Activated CD8-positive, alpha-beta memory T cell treated with anti-CD3 and anti-CD28 coated beads, Interleukin-2, amount 10 ng/mL, durations not matched to agents 7 days and 5 days (primary cell): ENCODE measurements at regions of chr2 and their contacts with region 1.

Region 1: DNA sequence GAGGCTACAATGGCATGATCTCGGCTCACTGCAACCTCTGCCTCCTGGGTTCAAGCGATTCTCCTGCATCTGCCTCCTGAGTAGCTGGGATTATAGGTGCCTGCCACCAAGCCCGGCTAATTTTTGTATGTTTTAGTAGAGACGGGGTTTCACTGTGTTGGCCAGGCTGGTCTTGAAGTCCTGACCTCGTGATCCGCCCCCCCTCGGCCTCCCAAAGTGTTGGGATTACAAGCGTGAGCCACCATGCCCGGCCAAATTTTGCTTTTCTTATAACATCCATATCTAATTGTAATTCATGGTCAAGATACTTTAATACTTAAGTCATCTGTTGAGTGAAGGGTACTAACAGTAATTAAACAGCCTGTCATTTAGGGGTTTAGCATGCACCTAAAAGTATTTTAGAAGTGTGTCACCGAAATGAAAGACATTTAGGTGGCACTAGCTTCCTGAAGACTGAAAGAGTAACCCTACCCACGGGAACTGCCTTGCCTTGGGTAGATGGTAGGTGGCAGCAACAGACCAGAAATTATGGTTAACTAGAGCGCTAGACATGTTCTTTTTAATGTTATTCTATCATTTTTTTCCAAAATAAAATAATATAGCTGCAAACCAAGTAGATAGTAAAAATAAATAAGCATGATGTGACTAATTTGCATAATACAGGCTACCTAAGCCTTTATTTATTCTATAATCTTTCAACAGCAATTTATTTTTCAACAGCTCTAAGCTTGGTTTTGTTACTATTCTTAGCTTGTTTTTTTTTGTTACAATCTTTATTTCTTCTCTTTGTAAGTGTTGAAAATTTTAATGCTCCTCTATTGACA is 8.6 kb upstream of the ACYP2 start:
- DNase-seq: peak; percentile 63
- ATAC-seq: peak; percentile 82
- H3K4me3 Mint-ChIP-seq: no peak overlapping the region
- H3K27ac Mint-ChIP-seq: no peak overlapping the region
- H3K4me1 Mint-ChIP-seq: peaks cover 11% of the 10 kb centered on the region
- H3K27me3 Mint-ChIP-seq: no peaks in the 10 kb centered on the region

Region 2: GRCh38 chr2:54092940-54093339 is 13.9 kb before region 1 on chr2:
- CTCF ChIA-PET with region 1: interaction called, 13 read pairs
- DNase-seq: no peak
- ATAC-seq: peak; percentile 42
- H3K4me3 Mint-ChIP-seq: no peak overlapping the region
- H3K27ac Mint-ChIP-seq: peak overlapping the region; percentile 22
- H3K4me1 Mint-ChIP-seq: peaks cover 13% of the 10 kb centered on the region
- H3K27me3 Mint-ChIP-seq: no peaks in the 10 kb centered on the region

Region 3: DNA sequence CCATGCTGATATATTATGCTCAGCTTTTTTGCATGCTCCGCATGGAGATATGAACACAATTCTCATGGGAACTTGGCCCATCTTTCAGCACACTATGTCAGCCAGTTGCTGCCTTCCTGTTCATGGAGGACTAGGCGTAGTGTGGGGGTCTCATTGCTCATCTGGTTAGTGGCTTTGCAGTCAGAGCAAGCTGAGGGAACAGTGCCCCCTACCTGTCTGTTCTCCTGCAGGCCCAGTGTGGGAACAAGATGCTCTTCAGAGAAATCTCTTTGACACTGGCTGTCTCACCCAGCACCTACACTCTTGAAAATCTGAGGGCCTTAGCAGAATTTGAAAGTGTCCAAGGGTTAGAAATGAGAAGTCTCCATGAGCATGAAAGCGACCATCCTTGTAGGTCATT is 396.3 kb after region 1 on chr2:
- CTCF ChIA-PET with region 1: interaction called, 16 read pairs
- DNase-seq: peak; percentile 56
- ATAC-seq: peak; percentile 39
- H3K4me3 Mint-ChIP-seq: no peak overlapping the region
- H3K27ac Mint-ChIP-seq: no peak overlapping the region
- H3K4me1 Mint-ChIP-seq: no peaks in the 10 kb centered on the region
- H3K27me3 Mint-ChIP-seq: peaks cover 4% of the 10 kb centered on the region

Region 4: DNA sequence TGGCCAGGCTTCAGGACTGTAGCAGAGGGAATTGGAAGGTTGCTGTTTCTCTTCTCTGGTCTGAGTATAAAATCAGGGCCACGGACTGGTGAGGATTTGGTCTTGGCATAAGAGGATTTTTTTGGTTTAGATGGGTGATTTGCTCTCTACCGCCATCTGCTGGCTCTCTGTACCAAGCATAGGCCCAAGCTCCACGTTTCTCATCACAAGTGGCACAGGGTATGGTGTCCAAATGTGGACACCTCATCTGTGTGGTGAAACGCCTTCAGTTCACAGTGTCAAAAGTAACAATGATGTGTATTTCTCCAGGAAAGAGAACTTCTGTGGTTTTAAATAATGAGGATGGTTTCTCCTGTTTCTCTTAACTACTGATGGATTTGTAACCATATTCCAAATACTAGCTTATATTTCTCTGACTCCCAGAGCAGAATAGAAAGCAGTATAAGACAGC is 731.8 kb after region 1 on chr2:
- CTCF ChIA-PET with region 1: interaction called, 12 read pairs
- DNase-seq: peak; percentile 72
- ATAC-seq: peak; percentile 76
- H3K4me3 Mint-ChIP-seq: no peak overlapping the region
- H3K27ac Mint-ChIP-seq: no peak overlapping the region
- H3K4me1 Mint-ChIP-seq: no peaks in the 10 kb centered on the region
- H3K27me3 Mint-ChIP-seq: no peaks in the 10 kb centered on the region